ENCODE measurements at regions of chr18 and their contacts with region 1.

Region 1: DNA sequence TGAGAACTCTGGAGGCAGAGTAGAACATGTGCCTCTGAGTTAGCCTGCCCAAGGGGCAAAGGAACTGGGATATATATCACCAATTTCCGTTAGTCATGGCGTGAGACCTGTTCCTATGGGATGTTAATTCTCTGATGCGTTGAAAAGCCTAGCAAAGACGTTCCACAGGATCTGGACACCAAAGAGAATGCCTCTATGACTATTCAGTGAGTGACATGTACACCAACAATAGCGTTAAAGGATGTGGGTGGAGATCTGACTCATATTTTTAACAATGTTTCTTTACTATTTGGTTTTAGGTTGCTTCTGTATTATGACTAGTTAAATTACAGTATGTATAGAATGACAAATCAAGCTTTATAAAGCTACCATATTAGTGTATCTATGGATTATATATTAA is 320.9 kb upstream of the MC4R start:
- DNase-seq: peak; percentile 81
- ATAC-seq: peak; percentile 99
- H3K4me3 ChIP-seq: no peak overlapping the region
- H3K27ac ChIP-seq: peak overlapping the region; percentile 19; the same call in 1 of the 2 replicates
- H3K4me1 ChIP-seq: peaks cover 10% of the 10 kb centered on the region
- H3K27me3 ChIP-seq: peaks cover 22% of the 10 kb centered on the region
- CTCF ChIP-seq: no peak

Region 2: GRCh38 chr18:60663060-60663989 is 30.1 kb before region 1 on chr18:
- CTCF ChIA-PET with region 1: no interaction called
- POLR2A ChIA-PET with region 1: no interaction called
- intact Hi-C with region 1: loop called (anchors 1 kb)
- DNase-seq: peak; percentile 75
- ATAC-seq: peak; percentile 94
- H3K4me3 ChIP-seq: no peak overlapping the region
- H3K27ac ChIP-seq: no peak overlapping the region
- H3K4me1 ChIP-seq: peaks cover 3% of the 10 kb centered on the region; the same call in 1 of the 2 replicates
- H3K27me3 ChIP-seq: no peaks in the 10 kb centered on the region
- CTCF ChIP-seq: 0 out of 2 replicates have a peak, but pooled peaks have one; percentile 15

Measured in PC-3 (cell line).